Activated naive CD8-positive, alpha-beta T cell treated with anti-CD3 and anti-CD28 coated beads, Interleukin-2, amount 10 ng/mL, durations not matched to agents 7 days and 5 days (primary cell): ENCODE measurements at regions of chr16 and their contacts with region 1.

Region 1: GRCh38 chr16:2155091-2156021 is at the start of gene TRAF7:
- DNase-seq: peak; percentile 95
- ATAC-seq: peak; percentile 94
- H3K4me3 Mint-ChIP-seq: peak within 1 kb of the TSS; percentile 97
- H3K27ac Mint-ChIP-seq: peak within 1 kb of the TSS; percentile 92
- H3K4me1 Mint-ChIP-seq: peaks cover 25% of the 10 kb centered on the region
- H3K27me3 Mint-ChIP-seq: no peaks in the 10 kb centered on the region
- total RNA-seq, gene TRAF7: 50.2 to 51.8 TPM

Region 2: GRCh38 chr16:1971796-1972489 is 183.4 kb before region 1 on chr16 and contains the start of gene TBL3:
- POLR2A ChIA-PET with region 1: interaction called, 13 read pairs
- DNase-seq: peak; percentile 99
- ATAC-seq: peak; percentile 93
- H3K4me3 Mint-ChIP-seq: peak within 1 kb of the TSS; percentile 96
- H3K27ac Mint-ChIP-seq: peak within 1 kb of the TSS; percentile 99
- H3K4me1 Mint-ChIP-seq: peaks cover 13% of the 10 kb centered on the region
- H3K27me3 Mint-ChIP-seq: no peaks in the 10 kb centered on the region
- total RNA-seq, gene TBL3: 29.4 to 30.7 TPM

Region 3: DNA sequence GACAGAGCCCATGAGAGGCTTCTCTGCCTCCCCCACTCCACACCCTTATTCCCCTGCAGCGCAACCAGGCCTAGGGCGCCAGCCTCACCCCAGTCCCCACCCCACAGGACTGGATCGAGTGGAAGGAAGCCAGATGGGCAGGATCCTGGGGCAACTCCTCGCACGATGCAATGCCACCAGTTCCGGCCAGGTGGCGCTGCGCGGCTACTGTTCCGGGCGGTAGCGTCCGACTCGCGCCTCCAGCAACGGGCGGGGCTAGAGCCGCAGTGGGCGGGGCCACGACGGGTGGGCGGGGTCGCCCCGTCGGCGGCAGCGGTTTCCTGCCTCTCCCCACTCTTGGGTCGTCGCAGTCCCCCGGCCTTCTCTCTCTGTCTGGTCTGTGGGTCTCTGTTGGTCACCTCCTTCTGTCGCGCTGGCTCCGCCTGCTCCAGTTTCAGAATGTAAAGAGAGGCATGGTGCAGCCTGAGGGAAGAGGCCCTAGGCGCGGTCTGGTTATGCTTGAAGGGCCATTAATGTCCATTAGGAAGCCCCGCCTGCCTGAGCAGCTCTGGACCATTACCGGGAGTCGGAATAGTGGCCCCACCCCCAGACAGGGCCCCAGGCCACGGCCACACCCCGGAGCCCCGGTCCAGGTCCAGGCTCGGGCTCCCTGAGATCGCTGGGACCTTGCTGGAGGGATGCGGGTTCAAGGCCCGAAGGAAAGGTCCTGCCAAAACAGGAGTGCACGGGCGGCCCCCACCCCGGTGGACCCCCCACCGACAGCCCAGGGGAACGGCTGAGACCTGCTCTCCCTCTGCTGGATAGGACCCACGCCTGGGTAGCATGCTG is 132.0 kb before region 1 on chr16:
- POLR2A ChIA-PET with region 1: interaction called, 19 read pairs
- DNase-seq: peak; percentile 99
- ATAC-seq: peak; percentile 62
- H3K4me3 Mint-ChIP-seq: peak overlapping the region; percentile 80
- H3K27ac Mint-ChIP-seq: peak overlapping the region; percentile 78
- H3K4me1 Mint-ChIP-seq: peaks cover 16% of the 10 kb centered on the region
- H3K27me3 Mint-ChIP-seq: peaks cover 37% of the 10 kb centered on the region

Region 4: DNA sequence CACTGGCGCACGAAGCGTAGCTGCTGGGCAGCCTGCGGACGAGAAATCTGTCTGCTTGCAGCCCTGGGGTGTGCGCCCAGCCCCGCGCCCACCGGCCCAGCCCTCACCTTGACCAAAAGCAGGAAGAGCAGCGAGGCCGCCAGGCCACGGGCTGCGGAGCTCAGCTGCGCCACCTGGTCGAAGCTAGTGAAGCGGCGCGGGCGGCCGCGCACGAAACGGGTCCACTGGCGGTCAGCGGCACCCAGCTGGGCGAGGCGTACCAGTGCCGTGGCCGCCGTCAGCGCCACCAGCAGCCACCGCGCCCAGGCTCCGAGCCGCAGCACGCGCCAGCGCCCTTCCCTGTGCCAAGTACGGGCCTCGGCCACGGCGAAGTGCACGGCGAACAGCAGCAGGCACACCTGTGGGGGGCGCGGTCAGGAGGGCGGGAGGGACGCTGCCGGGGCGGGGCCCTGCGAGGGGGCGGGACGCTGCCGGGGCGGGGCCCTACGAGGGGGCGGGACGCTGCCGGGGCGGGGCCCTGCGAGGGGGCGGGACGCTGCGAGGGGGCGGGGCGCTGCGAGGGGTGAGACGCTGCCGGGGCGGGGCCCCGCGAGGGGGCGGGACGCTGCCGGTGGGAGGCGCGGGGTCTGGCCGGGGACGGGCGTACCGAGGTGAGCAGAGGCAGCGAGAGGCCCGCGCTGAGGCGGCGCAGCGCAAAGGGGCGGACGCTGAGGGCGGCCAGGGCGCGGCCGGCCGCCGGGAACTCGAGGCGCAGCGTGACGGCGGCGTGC is 64.4 kb before region 1 on chr16:
- POLR2A ChIA-PET with region 1: no interaction called
- DNase-seq: no peak
- ATAC-seq: no peak
- H3K4me3 Mint-ChIP-seq: no peak overlapping the region
- H3K27ac Mint-ChIP-seq: no peak overlapping the region
- H3K4me1 Mint-ChIP-seq: no peaks in the 10 kb centered on the region
- H3K27me3 Mint-ChIP-seq: no peaks in the 10 kb centered on the region

Region 5: GRCh38 chr16:2115591-2115973 is 39.8 kb before region 1 on chr16:
- POLR2A ChIA-PET with region 1: no interaction called
- DNase-seq: no peak
- ATAC-seq: no peak
- H3K4me3 Mint-ChIP-seq: no peak overlapping the region
- H3K27ac Mint-ChIP-seq: no peak overlapping the region
- H3K4me1 Mint-ChIP-seq: no peaks in the 10 kb centered on the region
- H3K27me3 Mint-ChIP-seq: no peaks in the 10 kb centered on the region

Region 6: DNA sequence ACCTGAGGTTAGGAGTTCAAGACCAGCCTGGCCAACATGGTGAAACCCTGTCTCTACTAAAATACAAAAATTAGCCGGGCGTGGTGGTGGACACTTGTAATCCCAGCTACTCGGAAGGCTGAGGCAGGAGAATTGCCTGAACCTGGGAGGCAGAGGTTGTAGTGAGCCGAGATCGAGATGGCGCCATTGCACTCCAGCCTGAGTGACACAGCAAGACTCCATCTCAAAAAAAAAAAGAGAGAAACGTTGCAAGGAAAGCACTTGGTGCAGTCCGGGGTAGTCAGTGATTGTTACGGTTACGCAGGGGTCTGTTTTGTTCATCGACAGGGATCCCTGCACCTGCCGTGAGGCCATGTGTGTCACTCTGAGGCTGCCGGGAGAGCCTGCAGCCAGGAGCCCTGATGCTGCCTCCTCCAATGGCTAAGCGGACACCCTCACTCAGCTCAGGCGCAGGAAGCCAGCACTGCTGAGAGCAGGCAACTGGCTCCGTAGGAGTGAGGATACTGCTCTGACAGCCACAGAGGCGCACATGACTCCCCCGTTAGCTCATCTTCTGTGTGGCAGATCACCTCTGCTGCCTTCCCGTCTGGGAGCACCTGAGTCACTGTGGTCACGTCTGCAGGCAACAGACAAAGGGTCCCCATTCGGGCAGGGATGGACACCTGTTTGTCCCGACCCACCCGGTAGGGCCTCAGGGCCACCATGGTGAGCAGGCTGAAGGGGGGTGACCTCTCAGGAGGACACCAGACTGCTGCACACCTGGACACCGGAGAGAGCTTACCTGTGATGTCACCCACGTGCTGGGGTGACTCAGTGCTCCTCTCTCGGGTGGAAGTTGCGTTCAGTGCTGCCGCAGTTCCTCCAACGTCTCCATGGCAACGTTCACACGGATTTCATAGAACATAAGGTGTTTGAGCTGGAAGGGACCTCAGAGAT is 12.1 kb before region 1 on chr16:
- POLR2A ChIA-PET with region 1: interaction called, 32 read pairs
- DNase-seq: no peak
- ATAC-seq: no peak
- H3K4me3 Mint-ChIP-seq: no peak overlapping the region
- H3K27ac Mint-ChIP-seq: no peak overlapping the region
- H3K4me1 Mint-ChIP-seq: peaks cover 2% of the 10 kb centered on the region
- H3K27me3 Mint-ChIP-seq: peaks cover 12% of the 10 kb centered on the region

Region 7: DNA sequence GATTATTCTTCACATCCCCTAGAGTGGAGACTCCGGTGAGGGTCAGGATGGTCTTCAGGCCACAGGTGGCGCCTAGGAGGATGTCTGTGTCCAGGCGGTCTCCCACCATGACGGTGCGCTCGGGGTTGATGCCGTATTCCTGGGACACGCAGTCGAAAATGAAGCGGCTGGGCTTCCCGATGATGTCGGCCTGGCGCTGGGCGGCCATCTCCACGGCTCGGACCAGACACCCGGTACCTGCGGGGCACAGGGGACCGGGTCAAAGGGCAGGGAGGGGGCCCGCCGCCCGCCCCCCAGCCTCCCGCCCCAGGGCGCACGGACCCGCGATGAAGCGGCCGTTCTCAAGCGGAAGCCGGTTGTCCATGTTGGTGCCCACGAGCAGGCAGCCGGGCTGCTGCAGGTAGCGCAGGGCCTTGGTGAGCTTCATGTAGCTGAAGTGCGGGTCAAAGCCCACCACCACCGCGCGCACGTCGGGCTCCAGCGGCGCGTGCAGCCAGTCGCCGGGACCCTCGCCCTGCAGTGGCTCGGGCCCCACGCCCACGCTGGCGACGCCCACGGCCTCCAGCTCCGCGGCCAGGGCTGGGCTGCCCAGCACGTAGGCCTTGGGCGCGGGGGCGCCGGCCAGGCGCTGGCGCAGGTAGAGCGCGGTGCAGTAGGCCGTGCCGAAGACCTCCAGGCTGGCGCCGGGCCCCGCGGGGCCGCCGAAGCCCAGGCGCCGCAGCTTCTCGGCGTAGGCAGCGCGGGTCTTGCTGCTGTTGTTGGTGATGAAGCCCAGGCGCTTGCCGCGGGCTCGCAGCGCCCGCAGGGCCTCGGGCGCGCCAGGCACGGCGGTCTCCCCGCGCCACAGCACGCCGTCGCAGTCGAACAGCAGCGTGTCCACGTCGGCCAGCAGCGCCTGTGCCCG is 58.7 kb after region 1 on chr16:
- POLR2A ChIA-PET with region 1: interaction called, 16 read pairs
- DNase-seq: no peak
- ATAC-seq: no peak
- H3K4me3 Mint-ChIP-seq: peak overlapping the region; percentile 84
- H3K27ac Mint-ChIP-seq: peak overlapping the region; percentile 62
- H3K4me1 Mint-ChIP-seq: peaks cover 18% of the 10 kb centered on the region
- H3K27me3 Mint-ChIP-seq: no peaks in the 10 kb centered on the region

Region 8: DNA sequence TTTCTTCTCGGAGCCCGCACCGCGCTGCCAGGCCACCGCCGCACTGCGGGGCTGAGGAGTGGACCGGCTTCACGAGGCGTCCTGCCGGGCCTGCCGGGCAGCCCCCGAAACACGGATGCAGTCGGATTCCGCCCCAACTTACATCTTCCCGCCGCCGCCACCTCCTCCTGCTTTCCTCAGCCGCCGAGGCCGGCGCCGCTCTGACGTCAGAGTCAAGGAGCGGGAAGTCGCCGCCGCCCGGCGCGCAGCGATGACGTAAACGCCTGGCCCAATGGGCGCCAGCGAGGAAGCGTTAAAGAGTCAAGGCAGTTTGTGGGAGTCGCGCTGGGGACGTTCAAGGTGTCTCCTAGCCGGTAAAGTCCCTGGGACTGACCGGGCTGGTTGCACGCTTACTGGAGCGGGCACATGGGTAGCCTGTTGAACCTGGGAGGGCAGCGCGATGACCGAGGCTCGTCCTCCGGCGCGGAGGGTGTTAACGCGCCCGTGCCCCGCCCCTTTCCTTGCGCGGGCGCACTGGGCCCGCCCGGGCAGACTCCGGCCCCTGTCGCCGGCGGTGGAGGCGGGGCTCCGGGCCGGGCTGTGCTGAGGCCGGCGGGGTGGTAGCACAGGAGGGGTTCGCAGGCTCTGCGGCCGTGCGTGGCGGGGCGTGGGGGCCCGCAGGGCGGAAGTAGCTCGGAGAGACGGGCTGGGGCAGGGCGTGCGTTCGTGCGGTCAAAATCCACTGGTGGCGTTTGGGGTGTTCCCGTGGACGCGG is 112.7 kb after region 1 on chr16 and contains the start of gene RNPS1:
- POLR2A ChIA-PET with region 1: interaction called, 10 read pairs
- DNase-seq: peak; percentile 99
- ATAC-seq: peak; percentile 84
- H3K4me3 Mint-ChIP-seq: peak within 1 kb of the TSS; percentile 95
- H3K27ac Mint-ChIP-seq: peak within 1 kb of the TSS; percentile 97
- H3K4me1 Mint-ChIP-seq: peaks cover 27% of the 10 kb centered on the region
- H3K27me3 Mint-ChIP-seq: no peaks in the 10 kb centered on the region
- total RNA-seq, gene RNPS1: 212 to 220 TPM